Heart left ventricle (tissue), 16 donors: ENCODE measurements at regions of chr1 and their contacts with region 1.

Region 1: DNA sequence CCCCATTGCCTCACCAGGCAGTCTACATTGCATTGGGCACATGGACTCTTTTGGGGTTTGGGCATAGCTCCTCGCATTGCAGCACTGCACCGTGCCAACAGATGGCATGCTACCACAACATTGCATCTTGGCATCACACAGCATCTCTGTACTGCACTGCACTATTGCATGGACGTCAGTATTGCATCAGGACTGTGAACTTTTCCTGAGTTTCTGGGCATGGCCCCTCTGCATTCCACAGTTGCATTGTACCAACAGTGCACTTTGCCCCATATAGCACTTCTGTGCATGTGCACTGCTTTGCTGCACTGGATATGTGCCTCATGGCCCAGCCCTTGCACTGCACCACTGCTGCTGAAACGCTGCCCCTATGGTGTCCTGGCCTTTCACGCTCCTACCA is 9.6 kb downstream of the PTPRU start:
- DNase-seq: no peak
- ATAC-seq: peak in 3 of 4 donors; percentile 47 to 63 (median 60)
- H3K4me3 ChIP-seq: no peak overlapping the region
- H3K27ac ChIP-seq: no peak overlapping the region
- H3K4me1 ChIP-seq: no peaks in the 10 kb centered on the region
- H3K27me3 ChIP-seq: peaks cover 0 to 4% (median 0%) of the 10 kb centered on the region in 9 donors
- CTCF ChIP-seq: peak in 7 of 12 donors; percentile 23 to 49 (median 33)
- POLR2A ChIP-seq: no peak

Region 2: DNA sequence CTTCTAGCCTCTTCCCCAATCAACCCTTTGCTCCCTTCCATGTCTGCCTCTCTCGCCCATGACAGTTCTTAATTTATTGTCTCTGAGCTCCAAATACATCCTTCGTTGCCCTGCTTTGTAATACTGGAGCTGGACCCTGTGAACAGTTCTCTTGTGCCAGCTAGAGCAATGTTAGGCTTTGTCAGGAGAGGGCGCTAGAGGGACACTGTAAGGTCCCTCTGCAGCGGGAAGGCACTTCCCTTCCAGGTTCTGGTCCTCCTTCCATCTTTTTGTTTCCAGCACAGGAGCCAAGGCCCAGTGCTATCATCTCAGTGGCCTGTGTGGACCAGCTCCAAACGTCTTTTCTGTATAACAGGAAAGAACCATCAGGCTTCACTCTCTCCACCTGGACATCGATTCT is 86.3 kb after region 1 on chr1:
- intact Hi-C with region 1: loop called in 1 of 10 experiments (anchors 10 kb)
- DNase-seq: no peak
- ATAC-seq: no peak
- H3K4me3 ChIP-seq: no peak overlapping the region
- H3K27ac ChIP-seq: no peak overlapping the region
- H3K4me1 ChIP-seq: no peaks in the 10 kb centered on the region
- H3K27me3 ChIP-seq: peaks cover 0 to 18% (median 0%) of the 10 kb centered on the region in 9 donors
- CTCF ChIP-seq: peak in 4 of 12 donors; percentile 19 to 28 (median 22)
- POLR2A ChIP-seq: no peak

Region 3: GRCh38 chr1:29341936-29342335 is 96.1 kb after region 1 on chr1:
- intact Hi-C with region 1: loop called in 3 of 10 experiments (anchors 5 to 10 kb)
- DNase-seq: no peak
- ATAC-seq: no peak
- H3K4me3 ChIP-seq: no peak overlapping the region
- H3K27ac ChIP-seq: no peak overlapping the region
- H3K4me1 ChIP-seq: no peaks in the 10 kb centered on the region
- H3K27me3 ChIP-seq: peaks cover 0 to 63% (median 14%) of the 10 kb centered on the region in 9 donors
- CTCF ChIP-seq: peak in 3 of 12 donors; percentile 14 to 24 (median 22)
- POLR2A ChIP-seq: no peak

Region 4: GRCh38 chr1:29453502-29454240 is 207.8 kb after region 1 on chr1:
- intact Hi-C with region 1: loop called in 3 of 10 experiments (anchors 5 to 10 kb)
- DNase-seq: no peak
- ATAC-seq: peak in 1 of 4 donors; percentile 56
- H3K4me3 ChIP-seq: no peak overlapping the region
- H3K27ac ChIP-seq: no peak overlapping the region
- H3K4me1 ChIP-seq: no peaks in the 10 kb centered on the region
- H3K27me3 ChIP-seq: peaks cover 0 to 28% (median 0%) of the 10 kb centered on the region in 9 donors
- CTCF ChIP-seq: peak in 7 of 12 donors; percentile 7 to 38 (median 21)
- POLR2A ChIP-seq: no peak

Region 5: GRCh38 chr1:29703596-29704370 is 457.9 kb after region 1 on chr1:
- intact Hi-C with region 1: loop called in 2 of 10 experiments (anchors 10 kb)
- DNase-seq: no peak
- ATAC-seq: peak in 2 of 4 donors; percentile 30 to 34
- H3K4me3 ChIP-seq: no peak overlapping the region
- H3K27ac ChIP-seq: no peak overlapping the region
- H3K4me1 ChIP-seq: peaks cover 0 to 9% (median 0%) of the 10 kb centered on the region in 12 donors
- H3K27me3 ChIP-seq: peaks cover 0 to 32% (median 25%) of the 10 kb centered on the region in 9 donors
- CTCF ChIP-seq: peak; percentile 34 to 65 (median 54)
- POLR2A ChIP-seq: no peak